Ovary (tissue), 10 donors: ENCODE measurements at regions of chr21 and their contacts with region 1.

Region 1: DNA sequence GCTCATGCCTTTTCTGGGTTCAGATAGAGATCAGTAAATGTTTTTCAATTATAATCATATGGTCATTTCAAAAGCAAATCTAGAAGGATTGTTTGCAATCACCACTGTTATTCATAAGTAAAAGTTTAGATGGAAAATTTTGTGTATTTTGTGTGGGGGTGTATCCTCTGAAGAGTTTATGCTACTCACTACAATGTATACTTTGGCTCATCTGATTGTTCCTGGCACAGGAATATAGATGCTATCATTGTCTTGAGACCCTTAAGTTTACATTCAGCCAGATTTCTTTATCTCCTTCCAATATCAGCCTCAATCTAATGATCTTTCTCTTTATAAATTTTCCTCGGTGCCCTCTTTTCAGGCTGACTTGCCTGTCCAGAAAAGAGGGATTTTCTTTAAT is 33.0 kb downstream of the ADAMTS1 start:
- DNase-seq: no peak
- H3K4me3 ChIP-seq: no peak overlapping the region
- H3K27ac ChIP-seq: no peak overlapping the region
- H3K4me1 ChIP-seq: no peaks in the 10 kb centered on the region
- H3K27me3 ChIP-seq: no peaks in the 10 kb centered on the region
- CTCF ChIP-seq: no peak
- EP300 ChIP-seq: no peak
- POLR2A ChIP-seq: no peak

Region 2: GRCh38 chr21:26641062-26641461 is 171.1 kb before region 1 on chr21:
- intact Hi-C with region 1: no loop called
- DNase-seq: no peak
- H3K4me3 ChIP-seq: no peak overlapping the region
- H3K27ac ChIP-seq: no peak overlapping the region
- H3K4me1 ChIP-seq: no peaks in the 10 kb centered on the region
- H3K27me3 ChIP-seq: no peaks in the 10 kb centered on the region
- CTCF ChIP-seq: no peak
- EP300 ChIP-seq: no peak
- POLR2A ChIP-seq: no peak

Region 3: GRCh38 chr21:26801524-26801923 is 10.6 kb before region 1 on chr21:
- intact Hi-C with region 1: loop called in 1 of 4 experiments (anchors 1 kb)
- DNase-seq: no peak
- H3K4me3 ChIP-seq: no peak overlapping the region
- H3K27ac ChIP-seq: peak overlapping the region; percentile 77 to 78
- H3K4me1 ChIP-seq: peaks cover 20% of the 10 kb centered on the region
- H3K27me3 ChIP-seq: no peaks in the 10 kb centered on the region
- CTCF ChIP-seq: no peak
- EP300 ChIP-seq: no peak
- POLR2A ChIP-seq: peak; percentile 20

Region 4: DNA sequence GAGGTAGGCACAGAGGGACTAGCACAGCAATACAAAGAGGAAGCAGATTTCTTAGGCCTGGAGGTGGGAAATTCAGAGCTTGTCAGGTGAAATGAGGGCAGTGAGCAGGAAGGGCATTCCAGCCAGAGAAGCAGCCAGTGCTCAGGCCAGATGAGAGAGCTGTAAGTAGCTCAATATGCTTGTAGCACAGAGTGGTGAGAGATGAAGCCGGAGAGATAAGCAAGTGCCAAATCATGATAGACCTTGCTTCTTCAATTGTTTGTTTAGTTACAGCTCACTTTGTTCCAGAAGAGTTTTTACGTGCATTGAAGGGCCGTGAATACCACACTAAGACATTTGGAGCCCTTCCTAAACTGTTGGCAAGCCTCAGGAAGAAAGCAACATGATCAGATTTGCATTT is 75.1 kb after region 1 on chr21:
- intact Hi-C with region 1: no loop called
- DNase-seq: no peak
- H3K4me3 ChIP-seq: no peak overlapping the region
- H3K27ac ChIP-seq: no peak overlapping the region
- H3K4me1 ChIP-seq: peaks cover 2% of the 10 kb centered on the region
- H3K27me3 ChIP-seq: no peaks in the 10 kb centered on the region
- CTCF ChIP-seq: no peak
- EP300 ChIP-seq: no peak
- POLR2A ChIP-seq: no peak